ENCODE measurements at regions of chr19 and their contacts with region 1.

Region 1: DNA sequence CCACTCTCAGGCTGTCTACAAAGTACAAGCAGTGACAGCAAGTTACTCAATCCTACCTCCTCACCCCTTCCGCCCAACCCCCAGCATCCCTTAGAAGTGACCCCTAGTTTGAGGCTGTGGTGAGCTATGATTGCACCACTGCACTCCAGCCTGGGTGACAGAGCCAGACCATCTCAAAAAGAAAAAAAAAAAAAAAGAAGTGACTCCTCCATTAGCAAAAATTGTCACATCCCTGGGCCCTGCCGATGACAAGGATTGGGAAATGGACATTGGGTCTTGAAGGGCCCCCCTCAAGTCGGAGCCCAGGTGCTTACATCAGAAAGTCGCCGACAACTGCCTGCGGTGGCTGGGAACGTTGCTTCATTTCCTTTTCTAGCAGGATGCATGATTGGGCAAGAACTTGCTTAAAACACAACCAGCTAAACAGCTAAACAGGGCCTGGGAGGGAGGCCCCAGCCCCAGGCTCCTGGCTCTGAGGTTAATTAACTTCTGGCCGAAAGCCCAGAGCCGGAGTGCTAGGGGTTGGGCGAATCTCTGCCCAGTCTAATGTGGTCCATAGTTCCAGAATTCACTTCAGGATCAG is 15.3 kb downstream of the RAB3D start:
- DNase-seq: peak; percentile 92
- H3K4me3 ChIP-seq: no peak overlapping the region
- H3K27ac ChIP-seq: peak overlapping the region; percentile 62 to 87 (median 71)
- H3K4me1 ChIP-seq: peaks cover 0 to 24% (median 18%) of the 10 kb centered on the region in 4 donors
- H3K27me3 ChIP-seq: no peaks in the 10 kb centered on the region
- CTCF ChIP-seq: no peak
- EP300 ChIP-seq: peak in 2 of 4 donors; percentile 1 to 21
- POLR2A ChIP-seq: no peak

Region 2: GRCh38 chr19:11339254-11340098 is 15.3 kb after region 1 on chr19 and contains the start of gene RAB3D:
- intact Hi-C with region 1: loop called (anchors 2 kb)
- DNase-seq: peak; percentile 98
- H3K4me3 ChIP-seq: peak within 1 kb of the TSS; percentile 77 to 92 (median 82)
- H3K27ac ChIP-seq: peak within 1 kb of the TSS; percentile 78 to 90 (median 87)
- H3K4me1 ChIP-seq: peaks cover 0 to 35% (median 32%) of the 10 kb centered on the region in 4 donors
- H3K27me3 ChIP-seq: no peaks in the 10 kb centered on the region
- CTCF ChIP-seq: no peak
- EP300 ChIP-seq: no peak
- POLR2A ChIP-seq: peak in 1 of 2 donors; percentile 75
- total RNA-seq, gene RAB3D: 16.0 to 27.7 (median 22.9) TPM

Measured in sigmoid colon (tissue), 7 donors.